Activated CD4-positive, alpha-beta memory T cell treated with anti-CD3 and anti-CD28 coated beads for 36 hours (primary cell): ENCODE measurements at regions of chr1 and their contacts with region 1.

Region 1: GRCh38 chr1:113811888-113812660 is at the start of gene RSBN1:
- DNase-seq: peak; percentile 100
- H3K4me3 Mint-ChIP-seq: peak within 1 kb of the TSS; percentile 99
- H3K27ac Mint-ChIP-seq: peak within 1 kb of the TSS; percentile 91
- H3K4me1 Mint-ChIP-seq: peaks cover 29% of the 10 kb centered on the region
- H3K27me3 Mint-ChIP-seq: no peaks in the 10 kb centered on the region
- total RNA-seq, gene RSBN1: 17.5 to 18.5 TPM

Region 2: GRCh38 chr1:113389953-113390834 is 421.9 kb before region 1 on chr1 and contains the start of gene MAGI3:
- CTCF ChIA-PET with region 1: no interaction called
- POLR2A ChIA-PET with region 1: no interaction called
- intact Hi-C with region 1: loop called (anchors 1 kb)
- DNase-seq: peak; percentile 97
- H3K4me3 Mint-ChIP-seq: peak within 1 kb of the TSS; percentile 92
- H3K27ac Mint-ChIP-seq: peak within 1 kb of the TSS; percentile 77
- H3K4me1 Mint-ChIP-seq: peaks cover 24% of the 10 kb centered on the region
- H3K27me3 Mint-ChIP-seq: no peaks in the 10 kb centered on the region
- total RNA-seq, gene MAGI3: 7.3 to 7.4 TPM

Region 3: DNA sequence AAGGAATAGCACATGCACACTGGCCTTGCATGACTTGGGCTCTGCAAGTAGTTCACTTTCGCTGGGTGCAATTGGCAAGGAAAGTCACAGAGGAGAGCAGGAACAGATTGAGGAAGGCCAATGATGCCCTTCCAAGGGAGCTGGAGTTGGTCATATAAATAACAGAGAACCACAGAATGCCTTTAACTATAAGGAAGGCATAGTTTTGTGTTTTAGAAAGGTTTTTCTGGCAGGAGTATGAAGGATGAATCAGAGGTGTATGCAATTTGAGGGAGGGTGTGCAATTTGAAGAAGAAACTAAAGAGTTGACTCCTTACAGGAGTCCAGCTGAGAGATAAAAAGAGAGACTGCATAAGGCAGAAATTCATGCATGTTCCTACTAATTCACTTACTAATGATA is 164.9 kb before region 1 on chr1:
- CTCF ChIA-PET with region 1: no interaction called
- POLR2A ChIA-PET with region 1: no interaction called
- intact Hi-C with region 1: no loop called
- DNase-seq: no peak
- H3K4me3 Mint-ChIP-seq: no peak overlapping the region
- H3K27ac Mint-ChIP-seq: no peak overlapping the region
- H3K4me1 Mint-ChIP-seq: no peaks in the 10 kb centered on the region
- H3K27me3 Mint-ChIP-seq: no peaks in the 10 kb centered on the region

Region 4: GRCh38 chr1:113783254-113784099 is 28.6 kb before region 1 on chr1:
- CTCF ChIA-PET with region 1: interaction called, 4 read pairs
- POLR2A ChIA-PET with region 1: interaction called, 12 read pairs
- intact Hi-C with region 1: loop called (anchors 1 kb)
- DNase-seq: peak; percentile 55
- H3K4me3 Mint-ChIP-seq: peak overlapping the region; percentile 40
- H3K27ac Mint-ChIP-seq: peak overlapping the region; percentile 88
- H3K4me1 Mint-ChIP-seq: peaks cover 39% of the 10 kb centered on the region
- H3K27me3 Mint-ChIP-seq: no peaks in the 10 kb centered on the region

Region 5: DNA sequence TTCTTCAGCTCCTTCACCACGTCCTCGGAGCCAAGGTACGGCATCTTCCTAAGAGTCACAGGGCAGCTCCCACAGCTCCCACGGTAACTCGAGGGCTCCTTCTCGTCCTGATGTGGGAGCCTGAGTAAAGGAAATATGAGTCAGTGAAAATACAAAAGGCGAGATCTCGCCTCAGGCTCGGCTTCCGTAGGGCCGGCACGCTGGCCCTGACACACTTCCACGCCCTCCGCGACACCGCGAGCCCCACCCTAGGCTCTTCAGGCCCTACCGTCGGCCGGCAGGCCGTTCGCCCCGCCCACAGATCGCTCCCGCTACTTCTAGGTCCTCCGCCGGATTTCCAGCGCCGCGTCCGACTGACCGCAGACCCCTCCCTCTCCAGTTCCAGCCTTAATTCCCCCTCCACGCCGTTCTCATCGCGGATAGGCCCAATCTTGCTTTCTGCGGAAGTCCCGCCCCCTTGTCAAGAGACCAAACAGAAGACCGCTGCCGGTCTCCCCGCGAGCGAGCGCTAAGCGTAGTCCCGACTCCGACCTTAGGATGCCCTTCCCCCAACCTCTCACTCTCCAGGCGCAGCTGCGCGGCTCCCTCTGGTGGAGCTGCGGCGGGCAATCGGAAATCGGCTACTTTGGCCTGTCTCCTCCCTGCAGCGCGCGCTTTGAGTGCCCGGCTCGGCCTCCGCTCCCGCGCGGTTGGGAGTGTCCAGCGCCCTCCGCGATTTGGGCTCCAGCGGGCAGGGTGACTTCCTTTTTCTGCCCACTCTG is 92.8 kb after region 1 on chr1 and contains the starts of genes AP4B1 and DCLRE1B:
- CTCF ChIA-PET with region 1: interaction called, 4 read pairs
- POLR2A ChIA-PET with region 1: interaction called, 9 read pairs
- intact Hi-C with region 1: loop called (anchors 1 kb)
- DNase-seq: peak; percentile 99
- H3K4me3 Mint-ChIP-seq: peak within 1 kb of the TSS; percentile 94
- H3K27ac Mint-ChIP-seq: peak within 1 kb of the TSS; percentile 96
- H3K4me1 Mint-ChIP-seq: peaks cover 39% of the 10 kb centered on the region
- H3K27me3 Mint-ChIP-seq: no peaks in the 10 kb centered on the region
- total RNA-seq, gene AP4B1: 41.4 to 42.2 TPM
- total RNA-seq, gene DCLRE1B: 19.4 to 19.6 TPM

Region 6: GRCh38 chr1:114716304-114717170 is 904.5 kb after region 1 on chr1 and contains the start of gene NRAS:
- CTCF ChIA-PET with region 1: no interaction called
- POLR2A ChIA-PET with region 1: no interaction called
- intact Hi-C with region 1: loop called (anchors 2 kb)
- DNase-seq: peak; percentile 97
- H3K4me3 Mint-ChIP-seq: peak within 1 kb of the TSS; percentile 91
- H3K27ac Mint-ChIP-seq: peak within 1 kb of the TSS; percentile 97
- H3K4me1 Mint-ChIP-seq: peaks cover 31% of the 10 kb centered on the region
- H3K27me3 Mint-ChIP-seq: no peaks in the 10 kb centered on the region
- total RNA-seq, gene NRAS: 51.7 to 52.1 TPM